RWPE1 (cell line): ENCODE measurements at regions of chr1 and their contacts with region 1.

Region 1: DNA sequence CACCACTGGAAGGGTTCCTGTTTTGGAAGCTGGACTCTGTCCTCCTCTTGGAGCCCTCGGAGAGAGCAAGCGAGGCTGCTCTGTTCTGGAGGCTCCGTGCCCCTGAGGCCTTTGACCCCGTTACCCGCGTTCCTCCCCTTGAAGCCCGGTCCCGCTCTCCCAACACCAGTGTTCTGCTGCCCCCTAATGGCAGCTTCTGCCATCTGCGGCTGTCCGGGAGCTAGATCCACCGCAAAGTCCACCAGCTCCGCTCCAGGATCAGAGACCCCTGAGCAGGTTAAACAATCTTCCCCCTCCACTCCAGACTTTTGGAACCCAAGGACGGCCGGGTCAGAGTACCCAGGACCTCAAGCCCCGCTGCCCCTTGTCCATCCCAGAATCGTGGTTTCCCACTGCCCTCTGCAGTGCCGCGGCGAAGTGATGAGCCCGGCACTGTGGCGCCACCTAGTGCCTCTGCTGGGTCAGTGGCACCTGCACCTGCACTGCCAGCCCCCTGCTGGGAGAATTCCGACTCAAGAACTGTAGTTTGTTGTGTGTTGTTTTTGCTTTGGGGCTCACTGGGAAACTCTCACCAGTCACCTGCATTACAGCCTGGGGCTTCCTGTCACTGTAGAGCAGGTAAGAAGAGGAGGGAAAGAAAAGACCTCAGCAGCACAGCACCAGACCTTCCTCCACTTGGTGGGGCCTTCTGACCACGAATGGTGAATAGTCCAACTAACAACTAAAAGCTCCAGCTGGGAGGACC is 63.5 kb upstream of the NFASC start:
- DNase-seq: peak; percentile 97
- H3K27ac ChIP-seq: no peak overlapping the region
- CTCF ChIP-seq: peak; percentile 98

Region 2: GRCh38 chr1:204565617-204566582 is 241.2 kb before region 1 on chr1:
- CTCF ChIA-PET with region 1: interaction called, 62 read pairs
- POLR2A ChIA-PET with region 1: no interaction called
- DNase-seq: peak; percentile 95
- H3K27ac ChIP-seq: no peak overlapping the region
- CTCF ChIP-seq: peak; percentile 59

Region 3: DNA sequence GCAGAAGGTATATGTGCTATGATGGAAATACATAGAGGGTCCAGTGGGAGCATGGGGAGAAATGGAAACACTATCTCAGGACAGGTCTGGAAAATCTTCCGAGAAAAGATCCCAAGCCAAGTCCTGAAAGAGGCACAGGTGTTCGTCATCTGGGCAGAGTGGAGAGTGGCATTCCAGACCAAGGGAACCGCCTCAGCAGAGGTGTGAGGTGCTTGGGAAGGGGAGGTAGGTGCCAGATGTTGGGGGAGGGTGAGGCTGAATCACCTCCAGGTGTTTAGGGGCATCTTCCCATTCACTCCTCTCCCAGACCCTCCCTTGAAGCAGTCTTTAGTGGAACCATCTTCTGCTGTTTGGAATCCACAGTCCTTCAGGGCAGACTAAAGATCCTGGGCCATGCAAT is 98.1 kb before region 1 on chr1:
- CTCF ChIA-PET with region 1: interaction called, 10 read pairs
- POLR2A ChIA-PET with region 1: no interaction called
- DNase-seq: no peak
- H3K27ac ChIP-seq: no peak overlapping the region
- CTCF ChIP-seq: no peak

Region 4: DNA sequence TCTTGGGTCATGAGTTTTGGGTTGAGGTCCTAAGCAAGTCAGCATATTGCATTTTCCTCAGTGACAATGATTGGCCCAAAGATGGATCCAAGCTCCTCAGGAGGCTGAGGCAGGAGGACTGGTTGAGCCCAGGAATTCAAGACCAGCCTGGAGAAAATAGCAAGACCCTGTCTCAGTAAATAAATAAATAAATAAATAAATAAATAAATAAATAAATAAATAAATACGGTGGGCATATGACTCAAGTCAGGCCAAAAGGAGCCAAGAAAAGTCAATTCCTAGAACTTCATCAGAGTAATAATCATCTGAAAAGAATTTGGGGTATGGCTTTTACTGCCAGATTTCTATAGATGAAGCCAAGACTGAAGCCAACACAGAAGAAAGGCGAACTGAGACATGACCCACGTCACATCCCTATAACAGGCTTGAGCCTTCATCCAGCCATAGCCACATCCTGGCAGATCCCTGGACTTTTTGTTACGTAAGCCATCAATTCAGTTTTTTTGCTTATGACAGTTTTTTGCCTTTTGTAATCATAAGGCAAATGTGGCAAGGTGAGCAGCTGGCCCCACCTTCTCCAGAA is 24.9 kb before region 1 on chr1:
- CTCF ChIA-PET with region 1: interaction called, 15 read pairs
- POLR2A ChIA-PET with region 1: no interaction called
- DNase-seq: peak; percentile 27
- H3K27ac ChIP-seq: no peak overlapping the region
- CTCF ChIP-seq: no peak

Region 5: DNA sequence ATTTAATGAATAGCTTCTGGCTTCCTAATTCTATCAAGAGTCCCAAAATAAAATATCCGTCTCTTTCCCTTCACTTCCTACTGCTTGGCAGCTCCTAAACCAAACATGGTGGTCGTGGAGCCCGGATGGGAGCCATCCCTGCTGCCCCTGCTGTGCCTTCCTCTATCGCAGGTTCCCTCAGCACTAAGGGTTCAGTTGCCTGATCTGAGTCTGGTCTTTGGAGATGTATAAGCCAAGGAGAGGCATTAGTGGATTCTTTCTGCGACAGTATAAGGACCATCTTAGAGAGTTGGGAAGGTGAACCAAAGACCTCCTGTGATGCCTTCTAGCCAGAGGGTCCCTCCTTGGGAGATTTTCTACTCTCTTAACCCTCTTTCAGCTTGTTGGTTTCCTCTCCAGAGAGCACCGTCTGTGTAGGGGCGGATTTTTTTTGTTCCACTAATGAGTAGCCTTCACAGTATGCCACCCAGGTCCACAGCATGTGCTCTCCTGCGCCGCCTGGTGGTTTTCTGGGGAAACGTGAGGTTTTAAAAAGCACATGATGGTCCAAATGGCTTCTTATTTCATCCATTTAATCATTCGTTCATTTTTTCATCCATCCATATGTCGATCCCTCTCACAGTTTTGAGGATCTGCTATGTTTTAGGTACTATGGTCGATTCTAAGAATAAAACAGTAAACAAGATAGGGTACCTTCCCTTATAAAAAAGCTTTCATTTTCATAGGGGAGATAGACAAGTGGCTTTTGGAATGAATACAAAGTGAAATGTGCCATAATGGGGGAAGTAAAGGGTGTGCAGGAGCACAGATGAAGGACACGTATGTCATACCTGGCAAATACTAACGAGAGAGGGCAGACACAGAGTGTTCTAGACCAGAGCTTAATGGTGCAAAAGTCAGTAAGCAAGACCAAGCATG is 134.6 kb after region 1 on chr1:
- CTCF ChIA-PET with region 1: interaction called, 27 read pairs
- POLR2A ChIA-PET with region 1: no interaction called
- DNase-seq: peak; percentile 75
- H3K27ac ChIP-seq: no peak overlapping the region
- CTCF ChIP-seq: peak; percentile 87

Region 6: GRCh38 chr1:204983136-204983535 is 176.0 kb after region 1 on chr1:
- CTCF ChIA-PET with region 1: no interaction called
- POLR2A ChIA-PET with region 1: no interaction called
- DNase-seq: no peak
- H3K27ac ChIP-seq: no peak overlapping the region
- CTCF ChIP-seq: no peak